HEK293 (cell line): ENCODE measurements at regions of chr1 and their contacts with region 1.

Region 1: GRCh38 chr1:31372961-31373896 is at the start of gene FABP3:
- H3K4me3 ChIP-seq: peak within 1 kb of the TSS; percentile 25
- H3K27ac ChIP-seq: peak within 1 kb of the TSS; percentile 38; the same call in 1 of the 2 replicates
- H3K4me1 ChIP-seq: no peaks in the 10 kb centered on the region
- CTCF ChIP-seq: no peak

Region 2: GRCh38 chr1:31296486-31297276 is 76.5 kb before region 1 on chr1 and contains the starts of genes SNRNP40 and ZCCHC17:
- CTCF ChIA-PET with region 1: no interaction called
- POLR2A ChIA-PET with region 1: interaction called, 39 read pairs
- H3K4me3 ChIP-seq: peak within 1 kb of the TSS; percentile 86
- H3K27ac ChIP-seq: peak within 1 kb of the TSS; percentile 40; the same call in 1 of the 2 replicates
- H3K4me1 ChIP-seq: peaks cover 8% of the 10 kb centered on the region; the same call in 1 of the 2 replicates
- CTCF ChIP-seq: peak; percentile 7; the same call in 1 of the 2 replicates